ENCODE measurements at regions of chr14 and their contacts with region 1.

Region 1: DNA sequence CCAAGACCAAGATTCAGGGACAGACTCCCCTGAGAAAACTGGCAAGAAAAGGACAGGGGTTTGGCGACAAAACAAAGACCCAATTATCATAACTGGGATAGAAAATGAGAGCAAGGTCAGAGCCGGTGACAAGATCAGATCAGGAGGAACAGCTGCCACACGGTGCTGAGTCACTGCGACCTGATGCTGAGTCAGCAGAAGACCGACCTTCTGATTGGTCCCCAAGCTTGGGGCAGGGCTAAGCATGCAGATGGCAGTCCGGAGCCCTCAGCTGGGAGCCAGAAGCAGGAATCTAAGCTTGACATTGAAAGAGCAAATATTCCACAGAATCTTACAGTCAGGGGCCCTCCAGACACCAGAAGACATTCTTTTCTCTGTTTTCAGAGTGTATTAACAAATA is 19.1 kb upstream of the ARMH4 start:
- DNase-seq: peak; percentile 86 to 90
- H3K4me3 ChIP-seq: no peak overlapping the region
- H3K4me3 Mint-ChIP-seq: peak overlapping the region; percentile 9
- H3K27ac Mint-ChIP-seq: peak overlapping the region; percentile 58
- H3K4me1 ChIP-seq: 0 out of 2 replicates have a peak, but pooled peaks cover 4% of the 10 kb centered on the region
- H3K4me1 Mint-ChIP-seq: peaks cover 9% of the 10 kb centered on the region
- H3K27me3 ChIP-seq: no peaks in the 10 kb centered on the region
- H3K27me3 Mint-ChIP-seq: peaks cover 8% of the 10 kb centered on the region
- CTCF ChIP-seq: no peak

Region 2: DNA sequence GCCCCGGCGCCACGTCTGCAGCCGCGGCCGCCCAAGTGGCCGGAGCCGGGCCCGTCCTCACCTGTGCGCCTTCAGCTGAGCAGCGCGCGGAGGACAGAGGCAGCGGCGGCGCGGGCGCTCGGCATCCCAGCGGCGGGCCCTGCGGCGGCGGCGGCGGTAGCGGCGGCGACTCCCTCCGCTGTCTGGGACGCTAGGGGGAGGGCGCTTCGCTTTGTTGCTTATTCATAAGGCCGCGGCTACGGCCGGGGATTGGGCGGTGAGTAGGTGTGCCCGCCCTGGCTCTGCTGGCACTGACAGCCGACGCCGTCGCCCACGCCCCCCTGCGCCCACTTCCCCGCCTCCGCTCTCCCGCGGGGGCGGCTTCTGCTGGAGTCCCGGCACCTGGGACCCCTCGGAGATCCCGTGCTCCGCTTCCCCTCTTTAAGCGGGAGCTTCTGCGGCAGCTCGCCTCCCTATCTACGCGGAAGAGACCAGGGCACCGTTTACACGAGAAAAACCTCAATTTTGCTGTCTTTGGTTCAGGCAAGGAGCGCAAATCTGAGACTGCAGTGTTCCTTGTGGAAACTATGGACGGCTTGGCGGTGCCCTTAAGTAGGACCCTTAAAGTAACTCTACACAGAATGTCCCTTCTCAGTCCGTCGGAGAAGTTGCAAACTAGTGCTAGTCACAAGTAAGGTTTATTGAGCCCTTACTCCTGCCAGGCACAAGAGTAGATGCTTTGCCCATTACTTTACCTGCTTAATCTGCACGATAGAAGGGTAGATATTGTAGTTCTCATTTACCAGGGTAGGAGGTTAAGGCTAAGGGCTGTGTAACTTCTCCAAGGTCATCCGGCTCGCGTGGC is 18.9 kb before region 1 on chr14 and contains the start of gene ARMH4:
- CTCF ChIA-PET with region 1: no interaction called
- POLR2A ChIA-PET with region 1: no interaction called
- intact Hi-C with region 1: loop called (anchors 1 kb)
- DNase-seq: peak; percentile 71 to 78
- H3K4me3 ChIP-seq: peak within 1 kb of the TSS; percentile 46
- H3K4me3 Mint-ChIP-seq: peak within 1 kb of the TSS; percentile 71
- H3K27ac Mint-ChIP-seq: no peak within 1 kb of the TSS
- H3K4me1 ChIP-seq: peaks cover 6% of the 10 kb centered on the region; the same call in 1 of the 2 replicates
- H3K4me1 Mint-ChIP-seq: no peaks in the 10 kb centered on the region
- H3K27me3 ChIP-seq: peaks cover 3% of the 10 kb centered on the region
- H3K27me3 Mint-ChIP-seq: peaks cover 27% of the 10 kb centered on the region
- CTCF ChIP-seq: no peak
- total RNA-seq, gene ARMH4: 0.07 and 0.16 TPM in 2 replicates

Region 3: GRCh38 chr14:58244556-58245387 is 73.7 kb after region 1 on chr14 and contains the start of gene PSMA3:
- CTCF ChIA-PET with region 1: no interaction called
- POLR2A ChIA-PET with region 1: no interaction called
- intact Hi-C with region 1: no loop called
- DNase-seq: peak; percentile 97 to 98
- H3K4me3 ChIP-seq: peak within 1 kb of the TSS; percentile 96
- H3K4me3 Mint-ChIP-seq: peak within 1 kb of the TSS; percentile 96
- H3K27ac Mint-ChIP-seq: peak within 1 kb of the TSS; percentile 99
- H3K4me1 ChIP-seq: peaks cover 21% of the 10 kb centered on the region; the same call in 1 of the 2 replicates
- H3K4me1 Mint-ChIP-seq: peaks cover 9% of the 10 kb centered on the region
- H3K27me3 ChIP-seq: no peaks in the 10 kb centered on the region
- H3K27me3 Mint-ChIP-seq: no peaks in the 10 kb centered on the region
- CTCF ChIP-seq: no peak
- total RNA-seq, gene PSMA3: 334 and 352 TPM in 2 replicates

Region 4: GRCh38 chr14:58362798-58363412 is 191.8 kb after region 1 on chr14:
- CTCF ChIA-PET with region 1: no interaction called
- POLR2A ChIA-PET with region 1: no interaction called
- intact Hi-C with region 1: no loop called
- DNase-seq: peak in 1 of 2 experiments; percentile 21
- H3K4me3 ChIP-seq: no peak overlapping the region
- H3K4me3 Mint-ChIP-seq: no peak overlapping the region
- H3K27ac Mint-ChIP-seq: no peak overlapping the region
- H3K4me1 ChIP-seq: no peaks in the 10 kb centered on the region
- H3K4me1 Mint-ChIP-seq: no peaks in the 10 kb centered on the region
- H3K27me3 ChIP-seq: no peaks in the 10 kb centered on the region
- H3K27me3 Mint-ChIP-seq: no peaks in the 10 kb centered on the region
- CTCF ChIP-seq: peak; percentile 38 to 42